A673 (cell line): ENCODE measurements at regions of chr10 and their contacts with region 1.

Region 1: DNA sequence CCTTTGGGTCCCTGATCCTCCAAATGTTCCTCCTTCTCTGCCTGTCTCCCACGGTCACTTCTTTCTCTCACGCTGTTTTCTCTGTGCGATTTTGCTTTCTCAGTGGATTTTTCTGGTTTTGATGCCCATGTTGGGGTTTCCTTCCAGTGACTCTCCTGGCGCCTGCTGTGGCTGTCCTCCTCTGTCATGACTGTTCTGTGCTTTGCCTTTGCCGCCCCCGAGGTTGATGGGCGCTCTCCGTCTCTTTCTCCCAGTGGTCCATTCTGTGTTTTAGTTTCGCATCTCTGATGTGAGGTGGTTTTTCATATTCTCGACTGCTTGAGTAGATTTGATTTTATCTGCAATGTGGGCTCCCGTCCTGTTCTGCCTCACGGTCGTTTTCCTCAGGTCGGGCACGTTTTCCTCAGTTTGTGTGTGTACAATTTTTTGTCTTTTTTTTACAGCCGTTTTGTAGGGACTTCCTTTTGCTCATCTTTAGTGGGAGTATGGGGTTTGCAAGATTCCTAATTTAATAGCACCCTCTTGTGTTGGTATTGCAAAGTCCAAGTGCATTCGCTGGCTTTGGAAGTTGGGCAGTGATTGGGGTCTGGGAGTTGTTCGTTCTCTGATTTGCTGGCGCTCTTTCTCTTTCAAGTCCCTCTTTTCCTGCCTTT is 100.0 kb downstream of the INPP5A start:
- DNase-seq: peak; percentile 70
- H3K4me3 ChIP-seq: no peak overlapping the region
- H3K27ac ChIP-seq: no peak overlapping the region
- H3K4me1 ChIP-seq: no peaks in the 10 kb centered on the region
- H3K27me3 ChIP-seq: no peaks in the 10 kb centered on the region
- CTCF ChIP-seq: peak; percentile 81

Region 2: DNA sequence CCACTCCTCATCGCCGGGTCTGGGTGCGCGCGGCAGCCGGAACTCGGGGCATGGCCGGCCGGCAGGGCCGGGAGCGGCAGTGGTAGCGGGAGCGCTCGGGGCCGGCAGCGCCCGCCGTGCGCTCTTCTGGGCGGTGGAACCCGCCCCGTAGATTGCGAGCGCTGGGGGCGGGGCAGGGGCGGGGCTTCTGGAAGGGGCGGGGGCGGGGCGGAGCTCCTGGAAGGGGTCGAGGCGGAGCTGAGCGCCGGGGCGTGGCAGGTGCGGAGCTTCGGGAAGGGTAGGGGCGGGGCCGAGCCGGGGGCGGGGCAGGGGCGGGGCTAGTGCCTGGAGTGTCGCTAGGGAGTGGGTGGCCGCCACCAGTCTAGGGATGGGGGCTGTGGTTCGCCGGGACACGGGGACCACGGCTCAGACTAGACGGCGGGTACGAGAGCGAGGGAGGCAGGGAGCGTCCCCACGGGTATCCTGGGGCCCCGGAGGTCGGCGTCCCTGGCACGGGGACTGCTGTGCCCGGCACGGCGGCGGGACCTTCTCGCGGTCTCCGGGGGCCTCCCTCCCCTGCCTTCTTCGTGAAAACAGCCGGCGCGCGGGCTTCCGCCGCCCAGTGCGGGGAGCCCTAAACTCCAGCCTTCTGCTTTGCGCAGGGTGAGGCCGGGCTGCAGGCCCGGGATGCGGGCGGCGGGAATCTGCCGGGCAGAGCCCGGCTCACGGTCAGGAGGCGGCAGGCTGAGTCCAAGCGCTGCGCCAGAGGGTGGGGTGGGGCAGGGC is 329.6 kb before region 1 on chr10 and contains the start of gene STK32C:
- CTCF ChIA-PET with region 1: no interaction called
- POLR2A ChIA-PET with region 1: no interaction called
- intact Hi-C with region 1: no loop called
- DNase-seq: peak; percentile 91
- H3K4me3 ChIP-seq: peak within 1 kb of the TSS; percentile 58
- H3K27ac ChIP-seq: no peak within 1 kb of the TSS
- H3K4me1 ChIP-seq: peaks cover 6% of the 10 kb centered on the region
- H3K27me3 ChIP-seq: peaks cover 11% of the 10 kb centered on the region
- CTCF ChIP-seq: no peak
- total RNA-seq, gene STK32C: 16.5 and 20.0 TPM in 2 replicates

Region 3: DNA sequence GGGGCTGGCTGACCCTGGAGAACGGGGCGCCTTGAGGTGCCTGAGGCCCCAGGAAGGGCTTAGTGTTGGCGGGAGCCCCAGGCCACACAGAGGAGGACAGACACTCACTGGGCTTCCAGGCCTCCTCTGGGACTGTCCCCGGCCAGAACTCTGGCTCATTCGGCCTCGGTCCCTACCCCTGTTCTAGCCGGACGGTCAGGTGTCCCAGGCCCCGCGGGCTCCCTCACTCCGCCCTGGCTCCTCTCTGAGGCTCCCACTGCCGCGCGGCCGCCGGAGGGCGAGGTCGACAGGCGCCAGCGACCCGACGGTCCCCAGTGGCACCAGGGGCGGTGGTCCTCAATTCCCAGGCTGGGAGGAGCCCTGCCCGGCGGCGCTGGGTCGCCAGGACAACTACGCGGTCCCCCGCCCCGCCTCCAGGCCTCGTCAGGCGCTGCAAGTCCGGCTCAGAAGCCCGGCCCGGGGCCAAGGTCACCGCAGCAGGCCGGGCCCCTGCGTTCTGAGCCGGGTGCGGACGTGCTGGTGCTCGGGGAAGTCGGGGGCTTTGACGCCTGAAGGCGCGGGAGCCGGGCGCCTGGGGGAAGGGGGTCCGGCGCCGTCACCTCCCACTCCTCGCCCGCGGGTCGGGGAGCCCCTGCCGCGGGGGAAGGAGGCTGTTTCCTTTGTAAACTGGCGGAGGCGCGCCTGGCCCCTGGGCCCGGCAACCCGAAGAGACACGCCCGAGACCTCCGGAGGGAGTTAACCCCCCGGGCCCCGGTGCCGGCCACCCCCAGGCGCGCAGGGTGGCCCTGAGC is 241.7 kb before region 1 on chr10:
- CTCF ChIA-PET with region 1: no interaction called
- POLR2A ChIA-PET with region 1: no interaction called
- intact Hi-C with region 1: no loop called
- DNase-seq: no peak
- H3K4me3 ChIP-seq: peak overlapping the region; percentile 69
- H3K27ac ChIP-seq: peak overlapping the region; percentile 47
- H3K4me1 ChIP-seq: peaks cover 17% of the 10 kb centered on the region
- H3K27me3 ChIP-seq: no peaks in the 10 kb centered on the region
- CTCF ChIP-seq: no peak

Region 4: DNA sequence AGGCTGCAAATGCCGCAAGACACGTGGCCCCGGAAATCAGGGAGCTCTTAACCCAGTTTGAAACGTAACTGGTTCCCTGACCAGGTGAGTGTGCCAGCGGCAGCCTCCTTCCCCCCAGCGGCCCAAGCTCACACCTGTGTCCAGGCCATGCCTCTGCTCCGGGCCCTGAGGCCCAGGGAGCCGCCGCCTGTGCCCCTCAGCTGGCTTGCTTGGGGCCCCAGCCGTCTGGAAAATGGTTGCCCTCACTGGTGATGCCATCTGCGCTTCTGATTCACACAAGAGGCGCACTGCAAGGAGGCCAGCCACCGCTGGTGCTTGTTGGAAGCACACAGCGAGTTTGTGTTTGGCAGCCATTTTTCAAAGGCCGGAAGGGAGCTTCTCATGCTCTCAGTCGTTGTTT is 231.4 kb before region 1 on chr10:
- CTCF ChIA-PET with region 1: no interaction called
- POLR2A ChIA-PET with region 1: no interaction called
- intact Hi-C with region 1: no loop called
- DNase-seq: no peak
- H3K4me3 ChIP-seq: no peak overlapping the region
- H3K27ac ChIP-seq: no peak overlapping the region
- H3K4me1 ChIP-seq: peaks cover 13% of the 10 kb centered on the region
- H3K27me3 ChIP-seq: no peaks in the 10 kb centered on the region
- CTCF ChIP-seq: no peak

Region 5: DNA sequence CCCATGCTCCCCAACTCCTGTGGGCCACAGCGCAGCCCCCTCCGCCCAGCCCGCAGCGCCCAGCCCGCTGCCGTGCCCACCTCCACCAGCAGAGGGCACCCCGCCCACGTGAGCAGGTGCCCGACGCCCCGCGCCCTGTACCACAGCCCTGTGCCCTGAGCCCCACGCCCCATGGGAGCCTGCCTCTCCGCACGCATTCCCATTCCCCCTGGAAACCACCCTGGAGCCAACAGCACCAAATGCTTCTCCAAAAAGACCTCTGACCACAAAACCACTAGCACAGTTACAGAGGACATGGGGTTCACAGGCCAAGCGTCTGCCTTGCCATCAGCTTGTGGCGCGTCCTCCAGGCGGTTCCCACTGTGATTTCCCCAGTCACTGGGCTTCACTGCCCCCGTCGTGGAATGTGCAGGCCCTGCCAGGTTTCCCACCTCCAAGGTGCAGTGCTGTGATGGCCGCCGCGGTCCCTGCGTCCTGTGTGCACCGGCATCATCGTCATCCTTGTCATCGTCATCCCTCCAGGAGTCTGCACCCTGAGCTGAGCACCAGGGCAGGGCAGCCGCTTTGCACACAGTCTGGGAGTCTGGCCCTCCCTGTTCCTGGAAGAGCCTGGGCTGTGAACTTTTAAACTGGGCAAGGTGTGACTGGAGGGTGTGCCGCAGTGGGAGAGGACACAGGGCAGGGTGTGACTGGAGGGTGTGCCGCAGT is 178.9 kb before region 1 on chr10:
- CTCF ChIA-PET with region 1: interaction called, 4 read pairs
- POLR2A ChIA-PET with region 1: no interaction called
- intact Hi-C with region 1: loop called (anchors 1 kb)
- DNase-seq: peak; percentile 60
- H3K4me3 ChIP-seq: no peak overlapping the region
- H3K27ac ChIP-seq: no peak overlapping the region
- H3K4me1 ChIP-seq: no peaks in the 10 kb centered on the region
- H3K27me3 ChIP-seq: no peaks in the 10 kb centered on the region
- CTCF ChIP-seq: peak; percentile 97

Region 6: GRCh38 chr10:133039107-133039802 is 401.7 kb after region 1 on chr10:
- CTCF ChIA-PET with region 1: no interaction called
- POLR2A ChIA-PET with region 1: no interaction called
- intact Hi-C with region 1: no loop called
- DNase-seq: no peak
- H3K4me3 ChIP-seq: no peak overlapping the region
- H3K27ac ChIP-seq: no peak overlapping the region
- H3K4me1 ChIP-seq: no peaks in the 10 kb centered on the region
- H3K27me3 ChIP-seq: peaks cover 82% of the 10 kb centered on the region
- CTCF ChIP-seq: no peak